PC-3 (cell line): ENCODE measurements at regions of chr10 and their contacts with region 1.

Region 1: DNA sequence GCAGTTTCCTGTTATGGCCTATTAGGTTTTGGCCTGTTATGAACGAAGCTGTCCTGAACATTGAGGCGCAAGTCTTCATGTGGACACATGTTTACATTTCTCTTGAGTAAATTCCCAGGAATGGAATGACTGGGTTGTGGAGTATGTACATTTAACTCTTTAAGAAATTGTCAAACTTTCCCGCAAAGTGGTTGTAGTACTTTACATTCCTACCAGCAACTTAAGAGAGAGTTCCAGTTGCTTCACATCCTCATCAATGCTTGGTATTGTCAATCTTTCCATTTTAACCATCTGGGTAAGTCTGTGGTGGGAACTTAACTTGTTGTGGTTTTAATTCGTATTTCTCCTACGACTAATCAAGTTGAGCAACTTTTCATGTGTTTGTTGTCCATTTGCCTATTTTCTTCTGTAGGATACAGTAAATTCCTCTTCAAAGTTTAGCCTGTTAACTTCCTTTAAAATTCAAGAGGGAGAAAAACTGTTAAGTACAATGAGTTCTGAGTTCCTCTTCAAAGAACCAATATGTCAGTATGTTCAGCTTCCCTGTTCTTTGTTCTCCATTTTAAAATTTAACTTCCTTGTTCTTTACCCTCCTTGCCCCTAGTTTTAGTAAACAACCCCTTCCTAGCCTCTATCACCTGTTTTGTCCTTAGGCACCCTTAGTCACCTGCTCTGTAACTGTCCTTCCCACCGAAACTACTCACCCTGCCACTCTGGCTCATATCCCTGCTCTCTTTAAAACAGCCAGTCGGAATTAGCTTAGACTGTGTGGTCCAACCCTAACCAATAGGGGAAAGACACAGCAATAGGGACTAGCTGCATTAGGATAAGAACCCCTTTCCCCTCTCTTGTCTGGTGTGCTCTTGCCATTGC is 74.0 kb downstream of the FAM241B start:
- DNase-seq: peak; percentile 96
- ATAC-seq: peak; percentile 84
- H3K4me3 ChIP-seq: no peak overlapping the region
- H3K27ac ChIP-seq: peak overlapping the region; percentile 73
- H3K4me1 ChIP-seq: peaks cover 18% of the 10 kb centered on the region
- H3K27me3 ChIP-seq: peaks cover 20% of the 10 kb centered on the region; the same call in 1 of the 2 replicates
- CTCF ChIP-seq: no peak

Region 2: GRCh38 chr10:69246581-69247312 is 457.3 kb before region 1 on chr10:
- CTCF ChIA-PET with region 1: no interaction called
- POLR2A ChIA-PET with region 1: interaction called, 11 read pairs
- intact Hi-C with region 1: no loop called
- DNase-seq: no peak
- ATAC-seq: no peak
- H3K4me3 ChIP-seq: no peak overlapping the region
- H3K27ac ChIP-seq: no peak overlapping the region
- H3K4me1 ChIP-seq: peaks cover 4% of the 10 kb centered on the region
- H3K27me3 ChIP-seq: no peaks in the 10 kb centered on the region
- CTCF ChIP-seq: no peak